Testis (tissue), 5 donors: ENCODE measurements at regions of chr6 and their contacts with region 1.

Region 1: DNA sequence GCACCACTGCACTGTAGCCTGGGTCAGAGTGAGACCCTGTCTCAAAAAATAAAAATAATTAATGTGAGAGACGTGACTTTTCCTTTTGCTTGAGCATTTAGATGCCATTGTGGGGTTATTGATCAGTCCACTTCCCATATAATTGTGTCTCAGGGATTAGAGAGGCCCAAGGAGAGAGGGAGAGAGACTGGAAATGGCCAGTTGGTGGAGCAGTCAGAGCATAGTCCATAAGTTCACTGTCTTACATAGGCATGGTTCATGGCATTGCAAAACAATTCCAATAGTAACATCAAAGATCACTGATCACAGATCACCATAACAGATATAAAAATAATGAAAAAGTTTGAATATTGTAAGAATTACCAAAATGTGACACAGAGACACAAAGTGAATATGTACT is 15.2 kb upstream of the SDHAF4 start:
- DNase-seq: no peak
- H3K4me3 ChIP-seq: no peak overlapping the region
- H3K27ac ChIP-seq: no peak overlapping the region
- H3K4me1 ChIP-seq: no peaks in the 10 kb centered on the region
- H3K27me3 ChIP-seq: no peaks in the 10 kb centered on the region
- CTCF ChIP-seq: no peak
- POLR2A ChIP-seq: no peak

Region 2: DNA sequence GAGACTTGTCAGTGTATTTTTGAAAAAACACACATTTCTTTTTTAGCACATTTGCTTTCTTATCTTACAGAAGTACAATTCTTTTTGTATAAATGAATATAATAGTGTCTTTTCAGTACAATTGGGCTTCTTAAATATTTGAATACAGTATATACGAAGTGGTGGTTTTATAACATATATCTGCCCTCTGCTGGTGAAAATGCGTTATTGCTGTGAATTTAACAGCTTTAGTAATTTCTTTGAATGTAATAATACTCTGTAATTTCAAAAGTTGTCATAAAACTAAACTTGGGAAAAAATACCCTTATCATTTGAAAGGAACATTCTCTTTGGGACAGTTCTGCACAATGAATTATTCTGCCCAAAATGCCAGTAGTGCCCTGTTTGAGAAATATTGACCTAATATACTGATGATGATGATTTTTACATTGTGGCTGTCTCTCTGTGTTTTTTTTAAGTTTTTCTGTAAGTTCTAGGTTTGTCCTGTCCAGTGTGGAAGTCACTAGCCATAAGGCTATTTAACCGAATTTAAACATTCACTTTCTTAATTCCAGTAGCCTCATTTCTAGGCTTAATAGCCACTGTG is 135.1 kb after region 1 on chr6:
- intact Hi-C with region 1: loop called (anchors 10 kb)
- DNase-seq: no peak
- H3K4me3 ChIP-seq: no peak overlapping the region
- H3K27ac ChIP-seq: no peak overlapping the region
- H3K4me1 ChIP-seq: peaks cover 5% of the 10 kb centered on the region
- H3K27me3 ChIP-seq: no peaks in the 10 kb centered on the region
- CTCF ChIP-seq: peak; percentile 42 to 92 (median 45)
- POLR2A ChIP-seq: no peak

Region 3: DNA sequence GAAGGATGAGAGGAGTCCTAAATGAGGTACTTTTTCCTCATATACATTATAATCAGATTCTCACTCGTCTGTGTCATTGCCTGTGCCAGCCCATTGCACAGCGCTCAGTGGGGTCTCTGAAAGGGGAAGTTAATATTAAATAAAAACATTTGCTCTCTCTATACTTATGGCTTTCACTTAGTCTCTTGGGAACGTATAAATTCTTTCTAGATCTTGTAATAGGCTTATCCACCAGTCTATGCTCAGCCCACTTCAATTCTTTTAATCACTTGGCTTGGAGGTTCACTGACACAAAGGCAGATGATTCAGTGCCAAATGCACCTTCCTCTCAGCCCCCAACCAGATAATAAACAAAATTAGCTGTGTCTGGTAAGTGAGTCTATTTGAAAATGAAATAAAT is 572.8 kb after region 1 on chr6:
- intact Hi-C with region 1: no loop called
- DNase-seq: no peak
- H3K4me3 ChIP-seq: no peak overlapping the region
- H3K27ac ChIP-seq: no peak overlapping the region
- H3K4me1 ChIP-seq: no peaks in the 10 kb centered on the region
- H3K27me3 ChIP-seq: no peaks in the 10 kb centered on the region
- CTCF ChIP-seq: no peak
- POLR2A ChIP-seq: no peak